ENCODE measurements at regions of chr13 and their contacts with region 1.

Region 1: GRCh38 chr13:48804821-48805601 is 151.3 kb downstream of the CYSLTR2 start:
- DNase-seq: no peak
- H3K4me3 Mint-ChIP-seq: peak overlapping the region; percentile 32
- H3K27ac Mint-ChIP-seq: peak overlapping the region; percentile 46
- H3K4me1 Mint-ChIP-seq: peaks cover 31% of the 10 kb centered on the region
- H3K27me3 Mint-ChIP-seq: peaks cover 10% of the 10 kb centered on the region

Region 2: GRCh38 chr13:48828962-48829421 is 24.0 kb after region 1 on chr13:
- intact Hi-C with region 1: loop called (anchors 1 kb)
- DNase-seq: no peak
- H3K4me3 Mint-ChIP-seq: no peak overlapping the region
- H3K27ac Mint-ChIP-seq: peak overlapping the region; percentile 42
- H3K4me1 Mint-ChIP-seq: peaks cover 46% of the 10 kb centered on the region
- H3K27me3 Mint-ChIP-seq: peaks cover 3% of the 10 kb centered on the region

Region 3: GRCh38 chr13:48853728-48854102 is 48.7 kb after region 1 on chr13:
- intact Hi-C with region 1: loop called (anchors 1 kb)
- DNase-seq: no peak
- H3K4me3 Mint-ChIP-seq: peak overlapping the region; percentile 9
- H3K27ac Mint-ChIP-seq: peak overlapping the region; percentile 78
- H3K4me1 Mint-ChIP-seq: peaks cover 45% of the 10 kb centered on the region
- H3K27me3 Mint-ChIP-seq: peaks cover 4% of the 10 kb centered on the region

Region 4: DNA sequence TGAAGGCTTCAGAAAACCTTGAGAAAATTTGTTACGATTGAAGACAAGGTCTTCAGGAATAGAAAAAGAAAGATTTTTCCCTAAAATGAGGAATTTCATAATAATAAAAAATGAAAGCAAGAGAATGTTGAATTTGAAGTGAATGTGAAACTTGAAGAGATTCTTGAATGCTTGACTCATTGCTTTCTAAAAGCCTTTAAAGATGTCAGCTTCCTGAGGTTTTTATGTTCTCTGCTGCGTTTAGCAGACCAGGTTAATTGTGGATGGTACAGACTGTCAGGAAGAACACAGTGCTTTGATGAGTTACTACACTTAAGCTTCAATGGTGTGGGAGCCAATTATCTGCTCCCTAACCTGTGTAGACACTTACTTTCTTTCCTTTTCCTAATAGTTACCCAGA is 74.4 kb after region 1 on chr13:
- intact Hi-C with region 1: loop called (anchors 1 kb)
- DNase-seq: no peak
- H3K4me3 Mint-ChIP-seq: peak overlapping the region; percentile 1
- H3K27ac Mint-ChIP-seq: peak overlapping the region; percentile 1
- H3K4me1 Mint-ChIP-seq: peaks cover 52% of the 10 kb centered on the region
- H3K27me3 Mint-ChIP-seq: peaks cover 6% of the 10 kb centered on the region

Region 5: GRCh38 chr13:49110122-49110912 is 305.3 kb after region 1 on chr13:
- intact Hi-C with region 1: loop called (anchors 5 kb)
- DNase-seq: peak; percentile 71
- H3K4me3 Mint-ChIP-seq: peak overlapping the region; percentile 87
- H3K27ac Mint-ChIP-seq: peak overlapping the region; percentile 70
- H3K4me1 Mint-ChIP-seq: peaks cover 31% of the 10 kb centered on the region
- H3K27me3 Mint-ChIP-seq: no peaks in the 10 kb centered on the region